ENCODE measurements at regions of chr12 and their contacts with region 1.

Region 1: GRCh38 chr12:80222261-80222660 is 122.9 kb downstream of the OTOGL start:
- DNase-seq: no peak
- ATAC-seq: no peak
- H3K4me3 ChIP-seq: no peak overlapping the region
- H3K4me3 Mint-ChIP-seq: no peak overlapping the region
- H3K27ac ChIP-seq: no peak overlapping the region
- H3K27ac Mint-ChIP-seq: no peak overlapping the region
- H3K4me1 ChIP-seq: no peaks in the 10 kb centered on the region
- H3K4me1 Mint-ChIP-seq: no peaks in the 10 kb centered on the region
- H3K27me3 ChIP-seq: no peaks in the 10 kb centered on the region
- H3K27me3 Mint-ChIP-seq: no peaks in the 10 kb centered on the region
- CTCF ChIP-seq: no peak

Region 2: GRCh38 chr12:79162949-79163348 is 1059.3 kb before region 1 on chr12:
- CTCF ChIA-PET with region 1: no interaction called
- POLR2A ChIA-PET with region 1: no interaction called
- intact Hi-C with region 1: loop called in 1 of 2 experiments (anchors 5 kb)
- DNase-seq: no peak
- ATAC-seq: no peak
- H3K4me3 ChIP-seq: no peak overlapping the region
- H3K4me3 Mint-ChIP-seq: no peak overlapping the region
- H3K27ac ChIP-seq: no peak overlapping the region
- H3K27ac Mint-ChIP-seq: no peak overlapping the region
- H3K4me1 ChIP-seq: no peaks in the 10 kb centered on the region
- H3K4me1 Mint-ChIP-seq: no peaks in the 10 kb centered on the region
- H3K27me3 ChIP-seq: no peaks in the 10 kb centered on the region
- H3K27me3 Mint-ChIP-seq: no peaks in the 10 kb centered on the region
- CTCF ChIP-seq: no peak

Region 3: GRCh38 chr12:80186727-80187217 is 35.5 kb before region 1 on chr12:
- CTCF ChIA-PET with region 1: no interaction called
- POLR2A ChIA-PET with region 1: no interaction called
- intact Hi-C with region 1: no loop called
- DNase-seq: peak in 6 of 9 experiments; percentile 4 to 65 (median 28)
- ATAC-seq: peak; percentile 54
- H3K4me3 ChIP-seq: no peak overlapping the region
- H3K4me3 Mint-ChIP-seq: no peak overlapping the region
- H3K27ac ChIP-seq: no peak overlapping the region
- H3K27ac Mint-ChIP-seq: no peak overlapping the region
- H3K4me1 ChIP-seq: no peaks in the 10 kb centered on the region
- H3K4me1 Mint-ChIP-seq: no peaks in the 10 kb centered on the region
- H3K27me3 ChIP-seq: no peaks in the 10 kb centered on the region
- H3K27me3 Mint-ChIP-seq: peaks cover 2% of the 10 kb centered on the region
- CTCF ChIP-seq: peak; percentile 62

Region 4: DNA sequence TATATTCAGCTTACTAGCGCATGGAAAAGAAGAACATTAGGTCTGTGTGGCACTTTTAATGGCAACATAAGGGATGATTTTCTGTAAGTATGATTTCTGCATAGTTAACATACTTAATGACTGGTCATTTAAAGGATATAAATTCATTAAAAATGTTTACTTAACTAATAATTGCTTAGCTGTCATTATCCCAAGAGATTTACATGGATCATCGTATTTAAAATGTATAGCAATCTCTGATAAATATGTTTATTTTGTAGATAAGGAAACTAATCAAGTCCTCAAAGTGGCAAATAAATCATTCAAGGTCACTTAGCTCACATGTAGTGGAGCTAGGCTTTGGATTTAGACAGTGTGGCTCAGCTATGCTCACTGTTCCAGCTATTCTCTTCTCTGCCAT is 35.7 kb after region 1 on chr12:
- CTCF ChIA-PET with region 1: no interaction called
- POLR2A ChIA-PET with region 1: no interaction called
- intact Hi-C with region 1: no loop called
- DNase-seq: no peak
- ATAC-seq: no peak
- H3K4me3 ChIP-seq: no peak overlapping the region
- H3K4me3 Mint-ChIP-seq: no peak overlapping the region
- H3K27ac ChIP-seq: no peak overlapping the region
- H3K27ac Mint-ChIP-seq: no peak overlapping the region
- H3K4me1 ChIP-seq: no peaks in the 10 kb centered on the region
- H3K4me1 Mint-ChIP-seq: no peaks in the 10 kb centered on the region
- H3K27me3 ChIP-seq: no peaks in the 10 kb centered on the region
- H3K27me3 Mint-ChIP-seq: peaks cover 8% of the 10 kb centered on the region
- CTCF ChIP-seq: no peak

Region 5: GRCh38 chr12:80269803-80270552 is 47.7 kb after region 1 on chr12:
- CTCF ChIA-PET with region 1: no interaction called
- POLR2A ChIA-PET with region 1: no interaction called
- intact Hi-C with region 1: no loop called
- DNase-seq: peak in 2 of 9 experiments; percentile 30 to 40
- ATAC-seq: no peak
- H3K4me3 ChIP-seq: no peak overlapping the region
- H3K4me3 Mint-ChIP-seq: no peak overlapping the region
- H3K27ac ChIP-seq: no peak overlapping the region
- H3K27ac Mint-ChIP-seq: no peak overlapping the region
- H3K4me1 ChIP-seq: no peaks in the 10 kb centered on the region
- H3K4me1 Mint-ChIP-seq: no peaks in the 10 kb centered on the region
- H3K27me3 ChIP-seq: no peaks in the 10 kb centered on the region
- H3K27me3 Mint-ChIP-seq: peaks cover 7% of the 10 kb centered on the region
- CTCF ChIP-seq: peak; percentile 53

Measured in CD8-positive, alpha-beta T cell (primary cell).